ENCODE measurements at regions of chr1 and their contacts with region 1.

Region 1: GRCh38 chr1:114346480-114347029 is 164.4 kb downstream of the TRIM33 start:
- DNase-seq: peak; percentile 98
- ATAC-seq: peak; percentile 98
- H3K4me3 Mint-ChIP-seq: peak overlapping the region; percentile 71
- H3K27ac Mint-ChIP-seq: peak overlapping the region; percentile 95
- H3K4me1 Mint-ChIP-seq: peaks cover 26% of the 10 kb centered on the region
- H3K27me3 Mint-ChIP-seq: no peaks in the 10 kb centered on the region

Region 2: DNA sequence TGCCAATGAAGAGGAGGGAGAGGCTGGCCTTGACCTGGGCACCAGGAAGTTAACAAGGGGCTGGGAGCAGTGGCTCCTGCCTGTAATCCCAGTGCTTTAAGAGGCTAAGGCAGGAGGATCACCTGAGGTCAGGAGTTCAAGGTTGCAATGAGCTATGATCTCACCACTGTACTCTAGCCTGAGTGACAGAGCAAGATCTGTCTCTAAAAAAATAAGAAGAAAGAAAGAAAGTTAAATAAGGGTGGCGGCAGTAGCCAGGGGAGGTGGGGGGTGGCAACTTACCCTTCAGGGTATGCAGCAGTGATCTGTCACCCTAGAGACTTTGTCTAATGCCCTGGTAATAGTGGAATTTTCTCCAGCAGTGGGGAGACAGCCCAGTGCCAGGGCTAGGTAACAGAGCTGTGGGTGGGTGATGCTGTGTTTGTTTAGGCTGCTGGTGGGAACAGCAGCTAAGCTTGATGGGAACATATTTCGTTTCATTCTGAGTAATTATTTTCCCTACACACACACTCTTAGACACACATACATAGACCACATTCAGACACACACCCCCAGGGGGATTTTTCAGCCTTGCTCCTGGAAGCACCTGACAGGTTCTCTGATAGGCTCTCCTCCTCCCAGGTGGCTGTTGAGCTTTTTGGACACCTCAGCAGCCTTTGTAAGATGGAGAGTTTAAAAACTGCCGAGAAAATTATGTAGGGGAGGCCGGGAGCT is 181.6 kb before region 1 on chr1:
- CTCF ChIA-PET with region 1: no interaction called
- POLR2A ChIA-PET with region 1: no interaction called
- intact Hi-C with region 1: no loop called
- DNase-seq: peak; percentile 57
- ATAC-seq: peak; percentile 93
- H3K4me3 Mint-ChIP-seq: no peak overlapping the region
- H3K27ac Mint-ChIP-seq: no peak overlapping the region
- H3K4me1 Mint-ChIP-seq: no peaks in the 10 kb centered on the region
- H3K27me3 Mint-ChIP-seq: peaks cover 15% of the 10 kb centered on the region

Region 3: GRCh38 chr1:114330451-114330983 is 16.0 kb before region 1 on chr1:
- CTCF ChIA-PET with region 1: interaction called, 11 read pairs
- POLR2A ChIA-PET with region 1: no interaction called
- intact Hi-C with region 1: no loop called
- DNase-seq: peak; percentile 40
- ATAC-seq: peak; percentile 74
- H3K4me3 Mint-ChIP-seq: no peak overlapping the region
- H3K27ac Mint-ChIP-seq: no peak overlapping the region
- H3K4me1 Mint-ChIP-seq: peaks cover 47% of the 10 kb centered on the region
- H3K27me3 Mint-ChIP-seq: no peaks in the 10 kb centered on the region

Region 4: GRCh38 chr1:114428083-114428749 is 81.7 kb after region 1 on chr1:
- CTCF ChIA-PET with region 1: interaction called, 28 read pairs
- POLR2A ChIA-PET with region 1: no interaction called
- intact Hi-C with region 1: loop called (anchors 1 kb)
- DNase-seq: peak; percentile 14
- ATAC-seq: no peak
- H3K4me3 Mint-ChIP-seq: no peak overlapping the region
- H3K27ac Mint-ChIP-seq: no peak overlapping the region
- H3K4me1 Mint-ChIP-seq: no peaks in the 10 kb centered on the region
- H3K27me3 Mint-ChIP-seq: no peaks in the 10 kb centered on the region

Region 5: DNA sequence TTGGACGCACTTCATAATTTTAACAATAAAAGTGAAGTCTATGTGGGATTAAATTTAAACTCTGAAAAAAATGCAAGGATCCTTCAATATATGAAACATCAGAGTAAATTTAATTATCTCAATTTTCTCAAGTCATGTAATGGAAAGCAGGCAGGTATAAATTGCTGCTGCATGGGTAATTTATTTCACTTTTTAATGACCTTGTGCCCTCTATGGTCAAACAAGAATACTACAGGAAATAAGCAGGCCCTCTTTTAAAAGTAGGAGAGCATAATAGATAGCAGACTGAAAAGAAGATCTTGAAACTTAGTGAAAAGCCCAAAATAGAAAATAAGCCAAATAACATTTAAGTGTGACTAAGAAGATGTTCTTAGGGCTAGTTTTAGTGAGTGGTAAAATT is 212.0 kb after region 1 on chr1:
- CTCF ChIA-PET with region 1: interaction called, 4 read pairs
- POLR2A ChIA-PET with region 1: no interaction called
- intact Hi-C with region 1: loop called (anchors 1 to 5 kb)
- DNase-seq: no peak
- ATAC-seq: no peak
- H3K4me3 Mint-ChIP-seq: no peak overlapping the region
- H3K27ac Mint-ChIP-seq: no peak overlapping the region
- H3K4me1 Mint-ChIP-seq: no peaks in the 10 kb centered on the region
- H3K27me3 Mint-ChIP-seq: no peaks in the 10 kb centered on the region

Region 6: DNA sequence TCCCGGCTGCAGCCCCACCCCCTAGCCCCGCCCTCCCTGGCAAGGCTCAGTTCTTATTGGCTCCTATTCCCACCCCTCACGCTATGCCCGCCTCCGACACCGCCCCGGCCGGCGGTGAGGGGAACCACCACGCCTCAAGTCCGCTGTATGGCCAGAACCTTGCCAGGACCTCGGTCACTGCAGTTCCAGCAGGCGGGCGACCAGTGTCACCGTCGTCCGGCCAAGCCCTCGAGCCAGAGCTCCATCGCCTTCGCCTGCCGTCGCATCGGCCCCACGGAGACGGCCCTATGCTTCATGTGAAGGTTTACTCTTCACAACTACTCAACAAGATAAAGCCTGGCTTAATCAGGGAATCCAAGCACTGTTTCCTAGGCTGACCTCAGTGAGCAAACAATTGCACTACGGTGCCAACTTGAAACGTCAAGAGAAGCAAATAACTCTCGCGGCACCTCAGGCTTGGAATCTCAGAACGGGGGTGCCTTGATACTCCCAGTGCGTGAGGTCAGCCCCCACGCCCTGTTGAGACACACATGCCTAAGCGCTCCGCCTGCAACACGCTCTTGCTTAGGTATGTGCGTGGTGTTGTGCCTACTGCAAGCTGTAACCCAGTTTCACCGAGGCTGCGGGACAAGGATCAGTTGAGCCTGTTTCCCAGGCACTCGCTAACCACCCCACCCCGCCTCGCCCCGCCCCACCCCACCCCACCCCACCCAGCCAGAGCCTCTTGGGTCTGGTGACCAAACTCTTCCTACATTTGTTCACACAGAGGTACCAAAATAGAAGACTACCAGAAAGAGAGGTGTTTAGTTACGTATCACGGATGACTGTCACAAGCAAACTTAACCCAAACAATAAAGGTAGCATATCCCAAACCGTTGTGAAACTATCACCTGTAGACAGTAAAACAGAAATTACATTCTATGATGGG is 323.8 kb after region 1 on chr1:
- CTCF ChIA-PET with region 1: interaction called, 3 read pairs
- POLR2A ChIA-PET with region 1: no interaction called
- intact Hi-C with region 1: loop called (anchors 1 kb)
- DNase-seq: peak; percentile 93
- ATAC-seq: peak; percentile 97
- H3K4me3 Mint-ChIP-seq: peak overlapping the region; percentile 84
- H3K27ac Mint-ChIP-seq: peak overlapping the region; percentile 63
- H3K4me1 Mint-ChIP-seq: peaks cover 11% of the 10 kb centered on the region
- H3K27me3 Mint-ChIP-seq: peaks cover 15% of the 10 kb centered on the region

Region 7: DNA sequence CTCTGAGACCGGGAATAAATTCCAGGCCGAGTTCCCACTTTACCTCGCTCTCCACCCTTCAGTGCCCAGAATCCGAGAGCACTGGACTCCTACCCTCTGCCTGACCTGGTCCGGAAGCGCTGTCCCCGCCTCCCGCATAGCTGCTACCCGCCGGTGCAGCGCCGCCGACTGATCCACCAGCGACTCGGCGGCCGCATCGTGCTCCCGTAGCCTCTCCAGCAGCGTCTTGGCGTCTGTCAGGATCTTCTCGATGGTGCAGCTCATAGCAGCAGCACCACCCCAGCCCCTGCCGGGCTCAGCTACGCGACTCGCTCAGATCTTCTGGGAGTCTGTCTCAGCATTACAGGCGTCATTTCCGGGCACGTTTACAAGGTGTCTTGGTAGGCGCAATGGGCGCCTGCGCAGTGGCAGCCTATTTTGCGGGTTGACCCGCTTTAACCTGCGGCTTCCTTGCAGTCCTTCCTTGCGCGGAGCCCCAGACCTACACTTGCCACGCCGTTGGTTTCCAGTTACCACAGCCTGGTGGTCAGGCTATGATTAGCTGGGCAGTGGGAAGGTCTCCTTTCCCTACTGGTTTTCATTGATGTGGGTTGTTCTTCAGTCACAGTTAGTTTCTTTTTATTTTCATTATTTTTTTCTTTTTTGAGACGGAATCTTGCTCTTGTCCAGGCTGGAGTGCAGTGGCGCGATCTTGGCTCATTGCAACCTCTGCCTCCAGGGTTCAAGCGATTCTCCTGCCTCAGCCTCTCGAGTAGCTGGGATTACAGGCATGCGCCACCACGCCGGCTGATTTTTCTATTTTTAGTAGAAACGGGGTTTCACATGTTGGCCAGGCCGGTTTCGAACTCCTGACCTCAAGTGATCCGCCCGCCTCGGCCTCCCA is 434.0 kb after region 1 on chr1 and contains the start of gene SIKE1:
- CTCF ChIA-PET with region 1: no interaction called
- POLR2A ChIA-PET with region 1: no interaction called
- intact Hi-C with region 1: loop called in 1 of 2 experiments (anchors 1 kb)
- DNase-seq: peak; percentile 96
- ATAC-seq: peak; percentile 100
- H3K4me3 Mint-ChIP-seq: peak within 1 kb of the TSS; percentile 100
- H3K27ac Mint-ChIP-seq: peak within 1 kb of the TSS; percentile 97
- H3K4me1 Mint-ChIP-seq: peaks cover 21% of the 10 kb centered on the region
- H3K27me3 Mint-ChIP-seq: no peaks in the 10 kb centered on the region
- total RNA-seq, gene SIKE1: 56.9 to 67.2 TPM

Region 8: DNA sequence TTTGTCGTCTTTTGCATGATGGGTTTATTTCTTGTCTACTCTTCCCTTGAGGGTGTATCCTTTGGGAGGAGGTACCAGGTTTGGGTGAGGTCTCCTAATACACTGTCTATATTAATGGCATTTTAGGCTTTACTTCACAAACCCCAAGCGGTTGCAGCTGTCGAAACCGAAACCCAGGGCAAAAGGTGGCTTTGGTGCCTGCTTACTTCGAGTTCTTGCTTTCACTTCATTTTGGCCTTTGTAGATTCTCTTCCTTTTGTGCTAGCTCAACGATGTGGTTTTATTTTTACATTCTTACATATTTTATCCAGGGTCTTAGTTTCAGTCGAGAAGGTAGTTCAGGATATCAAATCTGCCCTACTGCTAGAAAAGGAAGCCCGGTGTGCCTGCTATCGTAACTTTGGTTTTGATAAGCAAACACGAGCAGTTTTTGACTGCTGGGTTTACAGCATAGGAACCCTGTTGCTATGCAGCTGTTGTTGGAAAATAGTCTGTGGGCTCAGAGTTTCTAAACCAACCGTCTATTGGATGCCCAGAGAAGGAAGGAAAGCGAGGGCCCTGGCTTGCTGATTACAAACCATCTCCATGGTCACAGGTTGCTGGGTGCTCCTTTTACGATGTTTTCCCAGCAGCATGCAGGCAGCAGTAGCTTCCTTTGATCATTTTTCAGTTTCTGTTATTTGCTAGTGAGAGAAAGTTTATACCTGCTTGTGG is 752.6 kb after region 1 on chr1:
- CTCF ChIA-PET with region 1: no interaction called
- POLR2A ChIA-PET with region 1: no interaction called
- intact Hi-C with region 1: loop called in 1 of 2 experiments (anchors 10 kb)
- DNase-seq: peak; percentile 80
- ATAC-seq: peak; percentile 80
- H3K4me3 Mint-ChIP-seq: peak overlapping the region; percentile 75
- H3K27ac Mint-ChIP-seq: peak overlapping the region; percentile 69
- H3K4me1 Mint-ChIP-seq: peaks cover 39% of the 10 kb centered on the region
- H3K27me3 Mint-ChIP-seq: no peaks in the 10 kb centered on the region

Measured in activated CD4-positive, alpha-beta T cell treated with anti-CD3 and anti-CD28 coated beads for 36 hours (primary cell).